Esophagus muscularis mucosa (tissue), 4 donors: ENCODE measurements at regions of chr22 and their contacts with region 1.

Region 1: DNA sequence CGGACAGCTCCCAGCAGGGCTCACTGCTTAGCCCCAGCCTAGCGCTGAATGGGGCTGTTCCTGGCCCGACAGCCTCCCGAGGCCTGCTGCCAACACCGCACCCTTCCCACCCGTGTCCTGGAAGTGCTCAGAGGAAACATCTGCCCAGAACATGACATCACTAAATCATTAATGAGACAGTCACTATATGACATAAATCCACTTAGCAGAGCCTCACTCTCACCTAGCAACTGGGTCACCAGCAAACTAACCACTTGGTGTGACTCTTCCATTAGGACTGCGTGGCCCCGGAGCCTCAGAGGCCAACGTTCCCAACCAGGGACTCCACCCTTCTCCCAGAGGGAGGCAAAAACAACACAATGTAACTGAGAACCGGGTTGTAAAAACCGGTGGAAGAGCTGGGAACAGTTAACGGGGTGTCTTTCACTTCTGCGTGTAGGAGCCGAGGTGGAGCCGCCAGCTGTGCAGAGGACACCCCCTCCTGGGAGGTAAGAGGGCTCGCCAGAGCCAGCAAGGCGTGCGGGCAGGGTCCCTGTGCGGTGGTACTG is 21.4 kb upstream of the PACSIN2 start:
- DNase-seq: no peak
- H3K4me3 ChIP-seq: no peak overlapping the region
- H3K27ac ChIP-seq: peak overlapping the region in 3 of 4 donors; percentile 48 to 67 (median 52)
- H3K4me1 ChIP-seq: peaks cover 5 to 24% (median 19%) of the 10 kb centered on the region in 4 donors
- H3K27me3 ChIP-seq: no peaks in the 10 kb centered on the region
- CTCF ChIP-seq: no peak
- EP300 ChIP-seq: no peak
- POLR2A ChIP-seq: no peak

Region 2: DNA sequence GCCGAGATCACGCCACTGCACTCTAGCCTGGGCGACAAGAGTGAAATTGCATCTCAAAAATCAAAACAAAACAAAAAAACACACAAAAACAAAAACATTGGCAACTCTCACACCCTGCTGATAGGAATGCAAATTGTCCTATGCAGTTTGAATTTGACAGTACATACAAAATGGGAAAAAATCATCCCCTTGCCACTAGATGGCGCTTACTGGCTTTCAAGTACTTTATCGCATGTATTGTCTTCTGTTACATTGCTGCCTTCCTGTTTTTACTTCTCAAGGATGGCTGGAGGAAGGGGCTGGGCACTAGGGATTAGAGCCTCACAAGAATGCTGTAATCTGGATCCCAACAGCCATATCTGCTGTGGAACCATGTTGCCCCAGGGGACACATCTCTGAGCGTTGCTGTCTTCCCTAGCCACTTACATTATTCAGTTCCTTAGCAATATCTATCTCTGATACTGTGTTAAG is 256.3 kb before region 1 on chr22:
- intact Hi-C with region 1: loop called (anchors 5 kb)
- DNase-seq: no peak
- H3K4me3 ChIP-seq: no peak overlapping the region
- H3K27ac ChIP-seq: no peak overlapping the region
- H3K4me1 ChIP-seq: peaks cover 0 to 6% (median 3%) of the 10 kb centered on the region in 4 donors
- H3K27me3 ChIP-seq: no peaks in the 10 kb centered on the region
- CTCF ChIP-seq: peak; percentile 86 to 88 (median 86)
- EP300 ChIP-seq: no peak
- POLR2A ChIP-seq: no peak

Region 3: GRCh38 chr22:42868751-42869251 is 167.6 kb before region 1 on chr22:
- intact Hi-C with region 1: loop called (anchors 5 kb)
- DNase-seq: no peak
- H3K4me3 ChIP-seq: no peak overlapping the region
- H3K27ac ChIP-seq: peak overlapping the region; percentile 64 to 68 (median 66)
- H3K4me1 ChIP-seq: peaks cover 12 to 26% (median 23%) of the 10 kb centered on the region in 4 donors
- H3K27me3 ChIP-seq: no peaks in the 10 kb centered on the region
- CTCF ChIP-seq: no peak
- EP300 ChIP-seq: no peak
- POLR2A ChIP-seq: no peak

Region 4: DNA sequence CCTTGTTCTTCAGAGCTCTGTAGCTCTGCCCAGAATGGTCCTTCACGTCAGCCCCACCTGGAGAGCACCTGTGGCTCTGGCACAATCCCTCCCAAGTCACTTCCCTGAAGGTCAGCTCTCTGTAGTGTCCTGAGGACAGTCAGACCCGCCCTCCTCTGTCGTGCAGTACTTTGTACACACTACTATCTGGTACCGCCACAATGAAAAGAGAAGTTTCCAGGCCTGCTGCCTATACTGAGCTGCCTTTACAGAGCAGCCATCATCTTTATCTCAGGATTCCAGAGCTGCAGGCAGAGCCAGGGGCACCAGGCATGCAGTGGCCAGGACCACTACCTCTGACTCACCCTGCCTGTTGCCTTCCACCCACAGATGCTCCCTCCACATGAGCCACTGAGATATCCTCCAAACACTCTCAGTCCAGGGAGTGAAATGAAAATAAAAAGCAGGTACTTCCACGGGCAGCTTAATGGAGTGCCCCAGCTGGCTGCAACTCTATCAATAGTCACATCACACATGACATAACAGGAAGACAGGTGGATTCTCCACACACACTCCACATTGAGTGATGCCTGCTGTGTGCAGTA is 28.7 kb before region 1 on chr22:
- intact Hi-C with region 1: no loop called
- DNase-seq: no peak
- H3K4me3 ChIP-seq: no peak overlapping the region
- H3K27ac ChIP-seq: peak overlapping the region in 2 of 4 donors; percentile 71 to 74
- H3K4me1 ChIP-seq: peaks cover 36 to 95% (median 88%) of the 10 kb centered on the region in 4 donors
- H3K27me3 ChIP-seq: no peaks in the 10 kb centered on the region
- CTCF ChIP-seq: no peak
- EP300 ChIP-seq: no peak
- POLR2A ChIP-seq: no peak